ENCODE measurements at regions of chr2 and their contacts with region 1.

Region 1: DNA sequence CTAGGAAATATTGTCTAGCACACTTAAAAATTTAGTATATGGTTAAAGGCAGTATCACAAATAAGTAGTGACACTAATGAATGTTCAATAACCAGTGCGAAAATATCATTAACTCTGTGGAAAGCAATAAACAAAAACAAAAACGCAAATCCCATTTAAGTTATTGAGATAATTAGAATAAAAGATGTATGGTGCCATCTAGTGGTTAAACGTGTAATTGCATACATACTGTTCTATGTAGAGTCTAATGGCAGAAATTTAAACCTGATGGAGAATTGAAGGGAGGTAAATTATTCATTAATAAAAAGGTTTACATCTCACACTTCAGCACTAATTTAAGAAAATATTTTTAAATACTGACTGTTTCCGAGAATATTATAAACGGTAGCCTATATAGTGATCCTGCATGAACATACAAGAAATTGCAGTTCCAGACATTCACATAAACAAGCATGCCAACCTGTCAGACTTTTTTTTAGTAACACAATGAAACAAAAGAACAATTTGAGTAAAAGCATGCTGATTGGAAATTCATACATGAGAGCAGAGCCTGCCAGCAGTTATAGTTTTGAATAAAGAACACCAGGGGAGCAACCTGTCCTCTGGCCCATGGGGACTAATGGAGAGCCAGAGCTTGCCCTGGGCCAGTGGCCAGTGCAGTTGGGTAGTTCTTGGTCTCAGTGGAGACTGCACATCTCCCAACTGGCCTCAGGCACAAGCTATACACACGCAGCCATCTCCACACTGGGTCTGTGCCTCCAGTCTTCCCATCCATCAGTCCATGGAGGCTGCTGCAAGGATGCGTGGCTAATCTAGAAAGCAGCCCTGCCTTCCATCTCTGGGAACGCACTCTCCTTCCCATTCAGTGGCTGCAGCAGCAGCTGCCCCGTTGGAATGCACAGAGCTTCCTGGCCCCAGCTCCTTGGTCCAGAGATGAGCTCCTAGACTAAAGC is 28.0 kb downstream of the GCG start:
- DNase-seq: no peak
- H3K4me3 ChIP-seq: no peak overlapping the region
- H3K27ac ChIP-seq: peak overlapping the region in 13 of 59 donors; percentile 4 to 76 (median 23)
- H3K27me3 ChIP-seq: no peaks in the 10 kb centered on the region
- CTCF ChIP-seq: peak; percentile 70 to 97 (median 87)

Region 2: DNA sequence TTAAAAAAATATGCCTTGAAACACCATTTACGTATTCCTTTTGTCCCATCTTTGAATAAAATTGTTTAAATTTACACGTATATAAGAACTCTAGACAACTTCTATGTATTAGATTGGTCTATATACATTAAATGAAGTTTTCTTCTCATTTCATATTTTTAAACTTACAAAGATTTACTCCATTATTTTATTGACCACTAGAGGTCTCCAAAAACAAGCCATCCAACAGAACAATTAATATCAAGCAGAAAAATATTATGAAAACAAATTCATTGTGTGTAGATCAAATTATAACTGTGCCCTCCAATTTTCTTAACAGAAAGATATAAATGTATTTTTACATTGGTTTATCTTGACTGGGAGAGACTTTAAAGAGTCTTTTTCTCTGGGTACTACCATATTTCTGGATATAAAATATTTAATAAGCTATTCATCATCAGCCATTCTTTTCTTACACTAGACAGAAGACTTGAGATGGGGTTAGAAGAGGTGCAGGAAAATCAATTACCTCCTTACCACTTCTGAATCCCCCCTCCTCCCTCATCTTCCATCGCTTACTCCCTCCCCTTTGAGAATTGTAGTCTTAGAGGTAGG is 116.5 kb before region 1 on chr2:
- intact Hi-C with region 1: loop called (anchors 2 to 5 kb)
- DNase-seq: no peak
- H3K4me3 ChIP-seq: no peak overlapping the region
- H3K27ac ChIP-seq: peak overlapping the region in 1 of 59 donors; percentile 34
- H3K27me3 ChIP-seq: no peaks in the 10 kb centered on the region
- CTCF ChIP-seq: peak; percentile 32 to 70 (median 54)

Region 3: DNA sequence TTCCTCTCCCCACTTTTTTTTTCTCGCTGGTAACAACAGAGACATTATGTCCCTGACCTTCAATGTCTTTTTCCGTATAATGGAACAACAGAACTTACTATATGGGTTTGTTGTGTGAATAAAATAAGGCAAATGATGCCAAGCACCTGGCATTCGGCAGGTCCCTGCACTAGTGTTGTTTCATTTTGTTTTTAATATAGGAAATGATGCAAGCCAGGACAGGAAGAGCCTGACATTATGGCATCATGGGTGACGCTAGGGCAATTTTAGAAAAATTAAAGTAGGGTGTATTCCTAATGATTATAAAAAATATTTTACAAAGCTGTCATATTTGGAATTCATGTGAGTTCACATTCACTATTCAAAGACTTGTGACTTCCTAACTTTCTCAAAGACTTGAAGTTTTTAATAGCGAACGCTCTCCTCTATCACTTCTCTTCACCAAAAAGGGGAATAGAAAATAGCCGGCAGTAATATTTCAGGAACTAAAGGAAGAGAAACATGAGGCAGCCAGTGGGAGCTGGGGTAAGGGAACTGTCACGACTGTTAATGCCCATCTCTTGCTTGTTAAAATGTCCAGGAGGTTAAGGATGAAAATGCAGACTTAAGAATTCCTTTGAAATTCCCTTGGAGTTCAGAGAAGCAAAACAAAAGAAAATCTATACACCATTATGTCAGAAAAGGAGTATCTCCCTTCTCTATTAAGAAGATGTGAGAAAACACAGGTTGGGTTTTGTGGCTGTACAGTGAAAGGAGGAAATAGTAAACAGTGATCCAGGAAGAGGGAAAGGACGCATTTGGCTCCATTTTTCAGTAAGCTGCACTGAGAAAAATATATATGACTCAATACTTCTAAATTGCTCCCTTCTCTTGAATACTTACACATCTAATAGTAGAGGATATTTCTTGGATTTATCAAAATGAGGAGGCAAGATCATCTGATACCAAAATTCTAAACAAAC is 110.3 kb before region 1 on chr2:
- intact Hi-C with region 1: loop called (anchors 2 to 5 kb)
- DNase-seq: no peak
- H3K4me3 ChIP-seq: peak overlapping the region in 12 of 59 donors; percentile 3 to 27 (median 13)
- H3K27ac ChIP-seq: peak overlapping the region in 36 of 59 donors; percentile 1 to 72 (median 36)
- H3K27me3 ChIP-seq: no peaks in the 10 kb centered on the region
- CTCF ChIP-seq: no peak